ENCODE measurements at regions of chr15 and their contacts with region 1.

Region 1: GRCh38 chr15:82298520-82298919 is 35.9 kb downstream of the SAXO2 start:
- DNase-seq: peak; percentile 79
- ATAC-seq: peak; percentile 94
- H3K4me3 Mint-ChIP-seq: no peak overlapping the region
- H3K27ac Mint-ChIP-seq: peak overlapping the region; percentile 19
- H3K4me1 Mint-ChIP-seq: peaks cover 7% of the 10 kb centered on the region
- H3K27me3 Mint-ChIP-seq: no peaks in the 10 kb centered on the region

Region 2: DNA sequence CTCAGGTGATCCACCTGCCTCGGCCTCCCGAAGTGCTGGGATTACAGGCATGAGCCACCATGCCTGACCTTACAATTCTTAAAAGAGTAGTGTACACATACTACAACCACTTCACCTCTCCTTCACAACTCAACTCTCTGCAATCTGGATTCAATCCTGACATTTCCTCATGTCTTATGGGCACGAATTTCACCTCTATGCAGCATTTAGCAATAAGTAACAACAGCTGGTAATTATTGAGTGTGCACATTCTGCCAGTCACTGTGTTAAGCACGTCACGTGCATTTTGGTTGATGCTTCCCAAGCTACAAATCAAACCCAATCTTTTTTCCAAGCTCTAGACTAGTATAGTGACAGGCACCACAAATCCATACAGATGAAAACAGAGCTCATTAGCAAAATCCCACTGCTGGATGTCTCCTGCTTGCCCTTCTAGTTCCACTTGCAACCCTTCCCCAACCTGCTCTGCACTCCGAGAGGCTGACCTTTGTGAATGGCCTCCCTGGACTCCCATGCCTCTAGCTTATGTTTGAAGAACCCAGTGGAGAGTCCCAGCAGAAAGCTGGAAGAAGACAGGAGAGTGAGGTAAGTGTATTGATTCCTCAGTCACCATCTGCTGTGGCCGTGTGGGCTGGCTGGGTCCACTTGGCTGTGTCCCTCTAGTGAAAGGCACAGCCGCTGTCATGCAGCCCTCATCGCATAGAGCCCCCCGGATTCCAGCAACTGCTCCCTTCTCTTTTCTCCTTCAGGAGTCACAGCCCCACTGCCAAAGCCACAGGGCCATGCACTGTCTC is 429.2 kb before region 1 on chr15:
- CTCF ChIA-PET with region 1: no interaction called
- POLR2A ChIA-PET with region 1: no interaction called
- intact Hi-C with region 1: no loop called
- DNase-seq: no peak
- ATAC-seq: no peak
- H3K4me3 Mint-ChIP-seq: no peak overlapping the region
- H3K27ac Mint-ChIP-seq: no peak overlapping the region
- H3K4me1 Mint-ChIP-seq: no peaks in the 10 kb centered on the region
- H3K27me3 Mint-ChIP-seq: peaks cover 8% of the 10 kb centered on the region

Region 3: GRCh38 chr15:82262422-82263026 is 36.0 kb before region 1 on chr15 and contains the starts of genes EFL1 and SAXO2:
- CTCF ChIA-PET with region 1: interaction called, 3 read pairs
- POLR2A ChIA-PET with region 1: no interaction called
- intact Hi-C with region 1: loop called in 1 of 2 experiments (anchors 1 kb)
- DNase-seq: peak; percentile 94
- ATAC-seq: peak; percentile 91
- H3K4me3 Mint-ChIP-seq: peak within 1 kb of the TSS; percentile 89
- H3K27ac Mint-ChIP-seq: peak within 1 kb of the TSS; percentile 91
- H3K4me1 Mint-ChIP-seq: peaks cover 33% of the 10 kb centered on the region
- H3K27me3 Mint-ChIP-seq: no peaks in the 10 kb centered on the region
- total RNA-seq, gene EFL1: 25.0 to 30.2 TPM
- total RNA-seq, gene SAXO2: 4.4 to 6.9 TPM